T-cell (primary cell): ENCODE measurements at regions of chr4 and their contacts with region 1.

Region 1: DNA sequence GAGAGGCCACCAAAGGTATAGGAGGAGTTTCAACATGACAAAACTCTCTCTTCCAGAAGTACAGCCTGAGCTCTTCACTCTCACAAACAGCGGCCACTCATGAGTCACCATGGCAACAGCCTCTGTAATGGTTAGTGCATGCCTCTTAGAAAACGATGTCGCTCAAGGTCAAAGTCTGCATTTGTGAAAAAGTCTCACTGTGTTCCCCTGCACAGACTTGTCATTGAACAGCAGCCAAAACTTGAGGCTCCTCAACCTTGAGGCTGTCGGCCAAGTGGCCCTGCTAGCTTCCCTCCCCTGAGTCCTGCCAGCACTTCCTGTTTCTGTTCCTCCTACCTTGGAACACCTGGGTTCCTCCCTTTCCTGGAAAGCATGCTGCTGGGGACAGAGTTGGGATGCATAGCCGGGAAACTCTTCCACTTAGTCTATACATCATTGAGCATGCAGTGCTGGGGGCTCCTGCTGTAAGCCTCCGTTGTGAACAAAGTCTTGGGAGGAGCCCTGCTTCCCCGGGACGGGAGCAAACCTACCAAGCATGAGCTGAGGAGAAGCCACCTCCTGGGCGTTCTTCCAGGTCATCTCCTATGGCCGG is 66.6 kb downstream of the ING2 start:
- DNase-seq: no peak
- ATAC-seq: no peak
- H3K4me3 ChIP-seq: no peak overlapping the region
- H3K4me3 Mint-ChIP-seq: no peak overlapping the region
- H3K27ac ChIP-seq: no peak overlapping the region
- H3K27ac Mint-ChIP-seq: no peak overlapping the region
- H3K4me1 ChIP-seq: no peaks in the 10 kb centered on the region
- H3K4me1 Mint-ChIP-seq: no peaks in the 10 kb centered on the region
- H3K27me3 ChIP-seq: peaks cover 0 to 10% of the 10 kb centered on the region in 2 experiments
- H3K27me3 Mint-ChIP-seq: peaks cover 6 to 12% of the 10 kb centered on the region in 2 donors

Region 2: DNA sequence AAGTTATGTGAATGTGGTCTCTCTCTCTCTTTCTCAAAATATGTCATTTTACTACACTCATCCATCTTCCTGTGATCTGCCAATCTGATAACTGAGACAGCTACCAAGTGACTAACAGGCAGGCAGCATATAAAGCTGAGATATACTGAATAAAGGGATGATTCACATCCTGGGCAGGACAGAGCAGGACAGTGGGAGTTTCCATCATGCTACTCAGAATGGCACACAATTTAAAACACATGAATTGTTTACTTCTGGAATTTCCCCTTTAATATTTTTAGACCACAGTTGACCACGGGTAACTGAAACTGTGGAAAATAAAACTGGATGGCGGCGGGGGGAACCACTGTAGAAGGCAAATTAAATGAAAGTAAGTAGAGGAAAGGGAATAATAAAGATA is 595.6 kb before region 1 on chr4:
- CTCF ChIA-PET with region 1: no interaction called
- POLR2A ChIA-PET with region 1: interaction called in 1 of 2 experiments, 10 read pairs
- DNase-seq: no peak
- ATAC-seq: no peak
- H3K4me3 ChIP-seq: no peak overlapping the region
- H3K4me3 Mint-ChIP-seq: no peak overlapping the region
- H3K27ac ChIP-seq: no peak overlapping the region
- H3K27ac Mint-ChIP-seq: no peak overlapping the region
- H3K4me1 ChIP-seq: no peaks in the 10 kb centered on the region
- H3K4me1 Mint-ChIP-seq: no peaks in the 10 kb centered on the region
- H3K27me3 ChIP-seq: peaks cover 0 to 17% of the 10 kb centered on the region in 2 experiments
- H3K27me3 Mint-ChIP-seq: peaks cover 28 to 32% of the 10 kb centered on the region in 2 donors